Activated CD4-positive, alpha-beta T cell treated with anti-CD3 and anti-CD28 coated beads, Interleukin-2, amount 10 ng/mL, durations not matched to agents 24 days and 14 days (primary cell): ENCODE measurements at regions of chr4 and their contacts with region 1.

Region 1: DNA sequence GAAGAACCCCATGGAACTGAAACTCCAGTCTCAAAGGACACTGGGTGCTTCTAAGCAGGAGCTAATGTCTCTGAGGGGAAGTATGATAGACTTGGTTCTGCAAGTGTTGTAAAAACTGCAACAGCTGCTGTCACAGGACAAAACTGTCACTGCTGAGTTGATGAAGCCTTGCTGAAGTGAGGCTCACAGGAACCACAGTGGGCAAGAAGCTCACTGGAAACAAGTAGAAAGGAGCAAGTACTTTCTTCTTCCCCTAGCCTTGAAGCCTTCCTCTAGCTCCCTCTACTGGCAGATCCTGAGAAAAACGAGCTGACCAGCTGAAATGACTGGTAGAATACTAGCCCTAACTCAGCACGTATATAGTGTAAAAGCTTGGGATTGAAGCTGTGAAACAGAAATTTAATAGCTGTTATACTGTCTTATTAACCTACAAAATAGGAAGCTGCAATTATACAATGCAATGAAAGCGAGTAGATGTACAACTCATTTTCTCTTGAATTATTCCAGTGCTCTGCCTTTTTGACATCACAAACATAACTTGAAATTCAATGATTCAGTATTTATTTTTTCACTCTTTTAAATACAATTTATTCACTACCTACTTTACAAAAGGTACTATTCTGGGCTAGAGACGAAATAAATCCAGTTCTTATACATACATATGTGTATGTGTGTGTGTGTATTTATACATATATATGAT is 91.4 kb downstream of the GABRB1 start:
- DNase-seq: peak; percentile 87
- H3K4me3 Mint-ChIP-seq: no peak overlapping the region
- H3K27ac Mint-ChIP-seq: no peak overlapping the region
- H3K4me1 Mint-ChIP-seq: no peaks in the 10 kb centered on the region
- H3K27me3 Mint-ChIP-seq: no peaks in the 10 kb centered on the region

Region 2: GRCh38 chr4:46844325-46844917 is 278.3 kb before region 1 on chr4:
- intact Hi-C with region 1: loop called (anchors 1 kb)
- DNase-seq: peak; percentile 81
- H3K4me3 Mint-ChIP-seq: no peak overlapping the region
- H3K27ac Mint-ChIP-seq: no peak overlapping the region
- H3K4me1 Mint-ChIP-seq: no peaks in the 10 kb centered on the region
- H3K27me3 Mint-ChIP-seq: no peaks in the 10 kb centered on the region

Region 3: DNA sequence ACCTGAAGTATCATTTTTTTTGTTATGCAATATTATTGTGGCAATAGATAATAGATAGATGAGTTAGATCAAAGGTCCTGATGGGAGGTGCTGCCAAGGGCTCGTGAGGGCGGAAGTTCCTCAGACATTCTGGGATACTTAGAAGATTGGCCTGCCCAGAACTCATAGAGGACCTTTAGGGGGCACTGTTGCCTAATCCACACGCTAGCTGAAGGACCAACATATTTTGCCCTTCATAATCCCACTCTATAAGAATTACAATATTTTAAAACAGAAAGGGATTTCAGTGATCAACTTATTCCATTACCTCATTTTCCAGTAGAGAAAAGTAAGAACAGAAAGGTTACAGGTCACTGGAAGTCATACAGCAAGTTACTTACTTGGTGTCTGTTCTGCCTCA is 190.8 kb before region 1 on chr4:
- intact Hi-C with region 1: loop called (anchors 2 kb)
- DNase-seq: peak; percentile 70
- H3K4me3 Mint-ChIP-seq: no peak overlapping the region
- H3K27ac Mint-ChIP-seq: no peak overlapping the region
- H3K4me1 Mint-ChIP-seq: no peaks in the 10 kb centered on the region
- H3K27me3 Mint-ChIP-seq: no peaks in the 10 kb centered on the region

Region 4: GRCh38 chr4:47135210-47135609 is 12.5 kb after region 1 on chr4:
- intact Hi-C with region 1: no loop called
- DNase-seq: no peak
- H3K4me3 Mint-ChIP-seq: no peak overlapping the region
- H3K27ac Mint-ChIP-seq: no peak overlapping the region
- H3K4me1 Mint-ChIP-seq: no peaks in the 10 kb centered on the region
- H3K27me3 Mint-ChIP-seq: no peaks in the 10 kb centered on the region

Region 5: DNA sequence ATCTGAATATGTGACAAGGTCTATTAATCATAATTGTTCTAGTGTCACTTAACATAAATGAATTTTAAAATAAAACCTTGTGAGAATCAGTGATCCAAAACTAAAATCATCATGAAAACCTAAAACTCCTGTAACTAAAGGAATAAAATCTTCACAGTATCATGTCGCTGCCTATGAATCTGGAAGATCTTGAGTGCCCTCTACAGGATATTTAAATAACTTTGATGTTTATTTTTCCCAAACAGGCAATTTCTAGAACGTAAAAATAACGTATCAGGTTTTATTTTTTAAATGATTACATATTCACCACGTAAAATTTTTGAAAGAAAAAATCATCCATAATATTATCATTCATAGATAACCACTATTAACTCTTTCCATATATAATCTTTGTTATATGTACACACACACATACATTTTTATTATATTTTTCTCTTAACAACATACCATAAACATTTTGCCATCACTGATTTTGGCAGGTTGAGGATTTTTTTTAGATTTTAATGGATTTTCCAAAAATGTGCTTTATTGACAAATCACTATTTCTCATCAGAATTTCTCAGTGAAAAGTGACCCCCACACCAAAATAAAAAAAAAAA is 261.2 kb after region 1 on chr4:
- intact Hi-C with region 1: loop called (anchors 2 kb)
- DNase-seq: no peak
- H3K4me3 Mint-ChIP-seq: no peak overlapping the region
- H3K27ac Mint-ChIP-seq: no peak overlapping the region
- H3K4me1 Mint-ChIP-seq: no peaks in the 10 kb centered on the region
- H3K27me3 Mint-ChIP-seq: peaks cover 7% of the 10 kb centered on the region